ENCODE measurements at regions of chr1 and their contacts with region 1.

Region 1: GRCh38 chr1:193059268-193060225 is at the starts of genes RO60 and UCHL5:
- DNase-seq: peak; percentile 98
- ATAC-seq: peak; percentile 99
- H3K4me3 ChIP-seq: peak within 1 kb of the TSS; percentile 62 to 73
- H3K27ac ChIP-seq: peak within 1 kb of the TSS; percentile 96 to 99
- H3K4me1 ChIP-seq: peaks cover 2 to 3% of the 10 kb centered on the region in 2 donors
- H3K27me3 ChIP-seq: no peaks in the 10 kb centered on the region
- total RNA-seq, gene RO60: 62.9 to 71.7 TPM
- total RNA-seq, gene UCHL5: 26.2 to 29.7 TPM

Region 2: GRCh38 chr1:193104906-193105820 is 45.6 kb after region 1 on chr1 and contains the start of gene GLRX2:
- intact Hi-C with region 1: loop called (anchors 2 to 5 kb)
- DNase-seq: peak; percentile 86 to 96
- ATAC-seq: peak; percentile 98
- H3K4me3 ChIP-seq: peak within 1 kb of the TSS; percentile 55 to 62
- H3K27ac ChIP-seq: peak within 1 kb of the TSS; percentile 28 to 83
- H3K4me1 ChIP-seq: no peaks in the 10 kb centered on the region
- H3K27me3 ChIP-seq: no peaks in the 10 kb centered on the region
- total RNA-seq, gene GLRX2: 13.4 to 14.4 TPM

Region 3: GRCh38 chr1:193311226-193311948 is 251.8 kb after region 1 on chr1:
- intact Hi-C with region 1: no loop called
- DNase-seq: no peak
- ATAC-seq: no peak
- H3K4me3 ChIP-seq: no peak overlapping the region
- H3K27ac ChIP-seq: no peak overlapping the region
- H3K4me1 ChIP-seq: no peaks in the 10 kb centered on the region
- H3K27me3 ChIP-seq: no peaks in the 10 kb centered on the region

Measured in aorta (tissue), 5 donors.